ENCODE measurements at regions of chr11 and their contacts with region 1.

Region 1: DNA sequence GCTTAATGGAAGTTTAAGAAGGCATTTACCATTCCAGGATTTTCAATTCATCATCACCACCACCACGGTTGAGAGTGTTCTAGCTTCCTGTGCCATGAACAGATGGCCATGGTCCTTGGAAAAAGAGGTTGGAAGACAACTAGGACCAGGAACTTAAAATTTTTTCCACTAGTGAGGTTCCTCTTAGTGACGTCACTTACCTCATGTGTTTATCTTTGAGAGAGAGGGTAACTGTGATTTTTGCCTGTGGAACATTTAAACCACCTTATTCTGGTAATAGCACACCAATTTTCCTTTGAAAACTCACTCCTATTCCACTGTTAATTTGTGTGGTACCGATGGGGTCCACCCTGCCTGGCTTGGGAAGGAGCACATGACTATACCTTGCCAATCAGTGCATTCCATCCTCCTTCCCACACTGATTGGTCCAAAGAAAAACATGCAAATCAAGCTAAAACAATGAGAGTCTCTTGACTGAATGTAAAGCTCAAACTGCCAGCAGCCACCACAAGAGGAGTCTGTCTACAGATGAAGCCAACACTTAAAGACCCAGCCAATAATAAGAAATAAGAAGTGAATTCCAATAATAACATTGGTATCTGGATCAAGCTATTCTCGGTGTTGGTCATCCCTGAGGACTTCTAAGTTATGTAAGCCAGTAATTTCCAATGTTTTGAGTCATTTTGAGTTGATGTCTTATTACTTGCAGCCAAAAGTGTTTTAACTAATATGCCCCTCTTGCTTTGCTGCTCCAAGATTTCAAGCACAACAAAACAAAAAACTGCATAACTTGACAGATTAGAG is 111.8 kb downstream of the MPPED2 start:
- DNase-seq: no peak
- ATAC-seq: no peak
- H3K4me3 ChIP-seq: no peak overlapping the region
- H3K4me3 Mint-ChIP-seq: no peak overlapping the region
- H3K27ac ChIP-seq: no peak overlapping the region
- H3K27ac Mint-ChIP-seq: no peak overlapping the region
- H3K4me1 ChIP-seq: no peaks in the 10 kb centered on the region
- H3K4me1 Mint-ChIP-seq: no peaks in the 10 kb centered on the region
- H3K27me3 ChIP-seq: no peaks in the 10 kb centered on the region
- H3K27me3 Mint-ChIP-seq: no peaks in the 10 kb centered on the region
- CTCF ChIP-seq: no peak

Region 2: GRCh38 chr11:30501744-30502143 is 27.4 kb after region 1 on chr11:
- CTCF ChIA-PET with region 1: no interaction called
- POLR2A ChIA-PET with region 1: no interaction called
- intact Hi-C with region 1: loop called in 1 of 2 experiments (anchors 1 kb)
- DNase-seq: no peak
- ATAC-seq: no peak
- H3K4me3 ChIP-seq: no peak overlapping the region
- H3K4me3 Mint-ChIP-seq: no peak overlapping the region
- H3K27ac ChIP-seq: no peak overlapping the region
- H3K27ac Mint-ChIP-seq: no peak overlapping the region
- H3K4me1 ChIP-seq: no peaks in the 10 kb centered on the region
- H3K4me1 Mint-ChIP-seq: no peaks in the 10 kb centered on the region
- H3K27me3 ChIP-seq: no peaks in the 10 kb centered on the region
- H3K27me3 Mint-ChIP-seq: no peaks in the 10 kb centered on the region
- CTCF ChIP-seq: no peak

Measured in CD8-positive, alpha-beta T cell (primary cell).